Activated T-helper 1 cell treated with anti-CD3 and anti-CD28 coated beads, Interleukin-12 subunit alpha, Interleukin-12 subunit beta, Interleukin-2, Interleukin-4 antibody, amounts not matched to agents 30 ng/mL and 10 ng/mL and 1 ng/mL, durations not matched to agents 14 hours and 24 hours and 36 hours (primary cell): ENCODE measurements at regions of chr14 and their contacts with region 1.

Region 1: DNA sequence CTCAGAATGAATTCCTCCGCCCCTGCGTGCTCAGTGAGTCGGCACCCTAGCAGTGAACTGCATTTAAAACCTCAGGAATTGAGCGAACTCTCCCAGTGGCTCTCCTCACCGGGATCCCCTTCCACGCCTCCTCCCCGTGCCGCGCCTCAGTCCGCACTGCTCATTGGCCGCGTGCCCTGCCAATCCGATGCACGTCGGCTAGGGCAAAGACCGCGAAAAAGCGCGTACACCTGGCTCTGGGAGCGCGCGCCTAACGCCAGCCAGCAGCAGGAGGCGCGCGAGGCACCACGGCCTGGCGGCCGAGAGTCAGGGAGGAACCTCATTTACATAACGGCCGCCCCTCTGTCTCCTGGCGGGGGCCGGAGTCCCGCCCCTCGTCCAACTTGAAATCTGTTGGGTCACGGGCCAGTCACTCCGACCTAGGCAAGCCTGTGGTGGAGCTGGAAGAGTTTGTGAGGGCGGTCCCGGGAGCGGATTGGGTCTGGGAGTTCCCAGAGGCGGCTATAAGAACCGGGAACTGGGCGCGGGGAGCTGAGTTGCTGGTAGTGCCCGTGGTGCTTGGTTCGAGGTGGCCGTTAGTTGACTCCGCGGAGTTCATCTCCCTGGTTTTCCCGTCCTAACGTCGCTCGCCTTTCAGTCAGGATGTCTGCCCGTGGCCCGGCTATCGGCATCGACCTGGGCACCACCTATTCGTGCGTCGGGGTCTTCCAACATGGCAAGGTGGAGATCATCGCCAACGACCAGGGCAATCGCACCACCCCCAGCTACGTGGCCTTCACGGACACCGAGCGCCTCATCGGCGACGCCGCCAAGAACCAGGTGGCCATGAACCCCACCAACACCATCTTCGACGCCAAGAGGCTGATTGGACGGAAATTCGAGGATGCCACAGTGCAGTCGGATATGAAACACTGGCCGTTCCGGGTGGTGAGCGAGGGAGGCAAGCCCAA is at the start of gene HSPA2:
- DNase-seq: peak; percentile 94
- H3K4me3 Mint-ChIP-seq: peak within 1 kb of the TSS; percentile 91
- H3K27ac Mint-ChIP-seq: peak within 1 kb of the TSS; percentile 92
- H3K4me1 Mint-ChIP-seq: peaks cover 42% of the 10 kb centered on the region
- H3K27me3 Mint-ChIP-seq: peaks cover 56% of the 10 kb centered on the region
- total RNA-seq, gene HSPA2: 11.2 and 11.6 TPM in 2 replicates

Region 2: GRCh38 chr14:64272019-64272418 is 268.5 kb before region 1 on chr14:
- intact Hi-C with region 1: no loop called
- DNase-seq: no peak
- H3K4me3 Mint-ChIP-seq: no peak overlapping the region
- H3K27ac Mint-ChIP-seq: no peak overlapping the region
- H3K4me1 Mint-ChIP-seq: peaks cover 10% of the 10 kb centered on the region
- H3K27me3 Mint-ChIP-seq: peaks cover 12% of the 10 kb centered on the region

Region 3: DNA sequence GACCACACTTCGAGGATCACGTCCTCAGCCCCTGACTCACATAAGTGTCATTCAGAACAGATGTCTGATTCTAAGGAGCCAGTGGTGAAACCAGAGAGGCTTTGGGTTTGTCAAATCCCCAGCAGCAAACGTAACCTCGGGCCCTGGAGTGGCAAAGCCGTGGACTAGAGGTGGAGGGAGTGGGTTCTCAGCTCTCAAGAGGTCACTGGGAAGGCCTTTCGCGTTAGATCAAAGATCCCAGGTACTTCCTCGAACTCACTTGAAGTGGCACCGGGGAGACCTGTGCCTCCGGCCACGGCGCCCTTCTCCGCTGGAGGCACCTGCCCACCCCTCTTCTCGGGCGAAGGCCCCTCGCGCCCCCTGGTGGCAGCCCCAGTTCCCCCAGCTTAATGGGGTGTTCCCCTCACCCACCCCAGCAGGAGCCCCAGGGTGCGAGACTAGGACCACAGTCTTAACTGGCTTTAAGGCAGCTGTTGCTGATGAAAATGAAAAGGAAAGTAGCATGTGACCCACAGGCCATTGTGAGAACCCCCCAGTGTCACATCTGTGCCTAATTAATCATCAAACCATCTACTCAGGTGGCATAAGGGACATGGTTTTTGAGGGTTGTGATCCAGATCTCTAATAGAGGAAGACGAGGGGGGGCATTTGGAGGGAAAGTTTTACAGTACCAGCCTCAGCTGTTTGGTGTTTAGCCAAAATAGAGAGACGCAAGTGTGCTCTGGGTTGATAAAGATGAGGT is 245.6 kb before region 1 on chr14:
- intact Hi-C with region 1: no loop called
- DNase-seq: peak; percentile 73
- H3K4me3 Mint-ChIP-seq: peak overlapping the region; percentile 73
- H3K27ac Mint-ChIP-seq: no peak overlapping the region
- H3K4me1 Mint-ChIP-seq: peaks cover 35% of the 10 kb centered on the region
- H3K27me3 Mint-ChIP-seq: peaks cover 26% of the 10 kb centered on the region

Region 4: DNA sequence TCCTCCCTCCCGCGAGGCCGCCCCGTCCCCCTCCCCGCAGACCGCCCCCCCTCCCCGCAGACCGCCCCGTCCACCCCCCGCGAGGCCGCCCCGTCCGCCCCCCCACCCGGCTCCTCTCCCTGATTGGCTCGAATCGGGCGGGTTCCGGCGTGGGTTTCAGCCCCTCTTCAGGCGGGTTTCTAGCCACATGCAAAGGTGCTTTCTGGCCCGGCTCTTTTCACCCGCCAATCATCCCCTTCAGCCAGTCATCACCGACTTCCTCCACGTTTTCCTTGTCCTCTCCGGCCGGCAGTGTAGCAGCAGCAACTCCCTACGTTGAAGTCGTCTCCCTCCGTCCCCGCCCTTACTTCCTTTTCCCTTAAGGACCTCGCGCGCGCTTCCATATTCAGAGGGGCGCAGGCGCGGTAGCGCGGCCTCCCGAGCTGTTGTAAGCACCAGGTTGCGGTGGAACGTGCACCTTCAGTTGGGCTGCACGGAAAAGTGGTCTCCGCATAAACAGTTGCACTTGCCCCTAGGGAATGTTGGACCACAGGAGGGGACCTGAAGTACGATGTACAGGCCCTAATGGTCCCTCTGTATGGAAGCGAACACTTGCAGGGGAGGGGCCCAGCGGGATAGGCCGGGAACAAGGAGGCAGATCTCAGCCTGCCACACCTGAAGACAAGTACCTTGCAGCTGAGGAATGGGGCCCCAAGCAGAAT is 201.7 kb before region 1 on chr14:
- intact Hi-C with region 1: loop called (anchors 1 kb)
- DNase-seq: peak; percentile 85
- H3K4me3 Mint-ChIP-seq: peak overlapping the region; percentile 81
- H3K27ac Mint-ChIP-seq: peak overlapping the region; percentile 84
- H3K4me1 Mint-ChIP-seq: peaks cover 29% of the 10 kb centered on the region
- H3K27me3 Mint-ChIP-seq: no peaks in the 10 kb centered on the region

Region 5: DNA sequence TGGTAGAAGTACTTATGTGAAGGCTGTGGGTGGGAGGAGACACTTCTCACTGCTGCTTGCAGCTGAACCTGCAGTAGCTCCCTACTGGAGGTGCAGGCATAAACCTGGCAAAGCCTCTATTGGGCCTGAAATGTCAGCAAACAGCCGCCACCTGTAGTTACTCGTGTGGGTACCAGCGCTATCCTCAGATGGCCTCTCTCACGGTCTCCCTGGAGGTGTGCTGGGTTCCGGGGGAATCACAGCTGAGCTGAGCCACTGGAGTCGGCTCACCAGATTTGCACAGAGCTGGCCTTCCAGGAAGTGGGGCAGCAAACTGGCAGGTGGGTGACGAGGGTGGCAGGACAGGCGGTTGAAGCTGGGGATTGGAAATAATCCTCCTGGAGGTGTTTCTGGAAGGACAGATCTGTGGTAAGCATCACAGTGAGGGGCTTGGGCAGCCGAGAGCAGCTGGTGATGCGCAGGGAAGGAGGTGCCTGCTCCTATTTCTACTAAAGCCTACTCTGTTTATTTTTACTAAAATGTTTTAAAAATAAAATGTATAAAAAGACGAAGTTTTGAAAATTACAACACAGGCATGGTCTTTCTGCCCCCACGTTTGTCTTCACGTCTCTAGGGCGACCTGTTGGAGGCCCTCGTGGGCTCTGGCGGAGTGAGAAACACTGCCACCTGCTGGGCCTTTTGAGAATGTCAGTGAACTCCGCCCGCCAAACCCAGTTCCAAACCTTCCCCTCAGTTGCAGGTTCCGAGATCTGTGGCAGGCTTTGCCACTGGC is 95.9 kb after region 1 on chr14:
- intact Hi-C with region 1: loop called (anchors 1 kb)
- DNase-seq: peak; percentile 43
- H3K4me3 Mint-ChIP-seq: no peak overlapping the region
- H3K27ac Mint-ChIP-seq: no peak overlapping the region
- H3K4me1 Mint-ChIP-seq: peaks cover 9% of the 10 kb centered on the region
- H3K27me3 Mint-ChIP-seq: peaks cover 9% of the 10 kb centered on the region

Region 6: DNA sequence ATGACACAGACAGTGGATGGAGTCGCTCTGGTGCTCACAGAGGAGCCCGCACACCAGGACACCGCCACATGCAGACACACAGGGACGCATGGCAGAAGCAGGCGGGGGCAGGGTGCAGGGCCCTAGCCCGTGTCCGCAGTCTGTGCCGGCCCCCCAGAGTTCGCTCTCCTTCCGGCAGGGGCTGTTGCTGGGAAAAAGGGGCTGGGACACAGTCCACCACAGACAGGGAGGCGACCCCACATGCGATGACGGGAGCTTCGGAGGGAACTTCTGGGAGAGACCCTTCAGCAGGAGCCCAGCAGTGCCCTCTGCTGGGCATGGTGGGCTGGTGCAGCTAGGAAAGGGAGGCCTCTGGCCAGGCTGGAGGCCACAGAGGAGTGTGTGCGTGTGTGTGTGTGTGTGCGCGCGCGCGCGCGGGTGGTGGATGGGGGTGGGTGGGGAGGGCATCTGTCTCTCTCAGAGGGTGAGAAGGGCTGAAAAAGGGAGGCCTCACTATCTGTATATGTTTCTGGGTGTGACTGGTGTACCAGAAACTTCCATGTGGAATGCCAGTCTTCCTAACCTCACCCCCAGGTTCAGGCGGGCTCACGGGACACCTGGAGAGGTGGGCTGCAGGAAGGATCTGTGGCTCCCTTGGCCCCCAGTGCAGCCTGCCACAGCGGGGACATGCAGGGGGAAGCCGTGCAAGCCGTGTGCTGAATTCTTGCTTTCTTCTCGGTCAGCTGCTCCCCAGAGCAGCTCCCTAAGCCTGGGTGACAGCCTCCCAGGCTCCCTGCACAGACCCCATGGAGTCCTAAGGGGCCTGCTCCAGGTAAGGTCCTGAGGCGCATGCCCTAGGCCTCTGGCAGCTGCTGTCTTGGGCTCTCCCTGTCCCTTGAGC is 224.4 kb after region 1 on chr14:
- intact Hi-C with region 1: loop called (anchors 10 kb)
- DNase-seq: peak; percentile 56
- H3K4me3 Mint-ChIP-seq: peak overlapping the region; percentile 27
- H3K27ac Mint-ChIP-seq: no peak overlapping the region
- H3K4me1 Mint-ChIP-seq: peaks cover 52% of the 10 kb centered on the region
- H3K27me3 Mint-ChIP-seq: peaks cover 13% of the 10 kb centered on the region

Region 7: DNA sequence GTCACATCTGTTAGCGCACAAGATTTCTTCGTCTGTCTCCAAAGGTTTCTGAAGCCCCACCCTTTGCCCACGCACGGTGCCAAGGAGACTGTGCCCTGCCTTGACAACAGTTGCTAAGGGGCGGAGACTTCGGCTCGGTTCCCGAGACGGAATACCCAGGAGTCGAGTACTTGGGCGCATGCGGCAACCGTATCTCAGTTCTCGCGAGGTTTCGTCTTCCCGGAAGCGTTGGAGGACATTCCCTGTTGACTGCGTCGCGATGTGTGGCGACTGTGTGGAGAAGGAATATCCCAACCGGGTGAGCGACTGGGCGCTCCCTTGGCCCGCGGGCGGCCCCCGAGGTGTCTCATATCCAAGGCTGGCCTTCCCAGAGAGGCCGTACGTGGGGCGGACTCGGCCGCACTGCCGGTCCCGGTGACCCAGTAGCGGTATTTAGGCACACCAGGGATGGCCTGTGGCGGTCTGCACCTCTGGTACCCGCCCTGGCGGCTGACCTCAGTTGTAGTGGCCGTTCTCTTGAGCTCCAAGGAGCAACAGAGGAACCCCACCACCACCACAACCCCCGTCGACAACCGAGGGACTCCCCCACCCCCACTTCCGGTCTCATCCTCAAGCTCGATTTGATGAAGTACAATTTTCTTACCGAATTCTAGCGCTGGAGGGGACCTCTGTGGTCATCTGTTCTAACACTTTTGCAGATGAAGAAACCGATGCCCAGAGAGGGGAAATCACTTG is 373.9 kb after region 1 on chr14 and contains the start of gene CHURC1:
- intact Hi-C with region 1: loop called (anchors 1 kb)
- DNase-seq: peak; percentile 93
- H3K4me3 Mint-ChIP-seq: peak within 1 kb of the TSS; percentile 88
- H3K27ac Mint-ChIP-seq: peak within 1 kb of the TSS; percentile 94
- H3K4me1 Mint-ChIP-seq: peaks cover 51% of the 10 kb centered on the region
- H3K27me3 Mint-ChIP-seq: peaks cover 5% of the 10 kb centered on the region
- total RNA-seq, gene CHURC1: 50.7 and 51.3 TPM in 2 replicates